CD8-positive, alpha-beta T cell (primary cell): ENCODE measurements at regions of chr5 and their contacts with region 1.

Region 1: DNA sequence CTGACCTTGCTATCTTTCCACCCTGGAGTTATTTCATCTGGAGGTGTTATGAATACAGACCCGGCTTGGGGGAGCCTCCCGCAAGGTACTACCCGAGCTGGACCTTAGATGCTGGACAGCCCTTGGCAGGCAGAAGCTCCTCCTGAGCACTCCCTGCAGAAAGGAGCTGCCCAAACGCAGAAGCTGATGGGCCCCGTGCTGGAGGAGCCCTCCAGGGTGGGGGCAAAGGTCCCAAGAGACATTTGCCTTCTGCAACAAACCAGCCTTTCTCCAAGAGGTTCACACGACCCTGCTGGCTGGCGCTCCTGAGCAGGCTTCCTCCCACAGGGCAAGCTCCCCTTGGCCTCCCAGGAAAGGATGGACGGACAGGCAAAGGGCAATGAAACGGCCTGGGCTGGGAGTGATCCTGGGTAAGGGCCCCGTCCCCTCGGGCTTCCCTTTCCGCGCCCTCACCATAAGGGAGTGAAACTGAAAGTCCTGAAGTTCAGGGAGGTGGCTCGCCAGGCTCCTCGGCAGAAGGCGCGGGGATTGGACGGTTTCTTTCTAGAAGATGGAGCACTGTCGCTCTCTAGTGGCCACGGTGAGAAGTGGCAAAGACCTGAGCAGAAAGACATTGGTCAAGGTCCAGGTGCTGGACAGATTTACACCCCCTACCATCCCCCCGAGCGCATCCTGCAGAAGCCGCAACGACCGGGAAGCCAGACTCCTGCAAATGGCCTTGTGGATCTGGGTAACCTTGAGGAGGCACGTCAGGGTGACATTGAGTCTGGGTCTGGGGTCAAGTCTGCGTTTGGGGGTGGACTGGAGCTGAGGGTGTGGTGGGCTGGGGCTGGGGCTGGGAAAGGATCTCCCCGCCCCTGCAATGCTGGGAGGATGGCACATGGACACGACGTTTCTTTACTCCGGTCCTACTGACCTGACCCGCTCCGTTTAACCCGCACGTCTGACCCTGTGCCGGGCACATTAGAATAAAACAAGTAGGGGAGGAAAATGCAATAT is 56.4 kb downstream of the NEURL1B start:
- DNase-seq: peak; percentile 67 to 92 (median 84)
- ATAC-seq: peak; percentile 98
- H3K4me3 ChIP-seq: peak overlapping the region; percentile 64 to 90
- H3K4me3 Mint-ChIP-seq: peak overlapping the region; percentile 93
- H3K27ac ChIP-seq: peak overlapping the region; percentile 43 to 81
- H3K27ac Mint-ChIP-seq: peak overlapping the region; percentile 92
- H3K4me1 ChIP-seq: peaks cover 10% of the 10 kb centered on the region
- H3K4me1 Mint-ChIP-seq: peaks cover 22% of the 10 kb centered on the region
- H3K27me3 ChIP-seq: peaks cover 0 to 3% of the 10 kb centered on the region in 2 experiments
- H3K27me3 Mint-ChIP-seq: peaks cover 16% of the 10 kb centered on the region
- CTCF ChIP-seq: peak; percentile 81

Region 2: GRCh38 chr5:171207256-171207847 is 1490.1 kb before region 1 on chr5:
- CTCF ChIA-PET with region 1: no interaction called
- POLR2A ChIA-PET with region 1: no interaction called
- intact Hi-C with region 1: loop called in 1 of 2 experiments (anchors 5 kb)
- DNase-seq: peak in 5 of 9 experiments; percentile 1 to 59 (median 17)
- ATAC-seq: no peak
- H3K4me3 ChIP-seq: no peak overlapping the region
- H3K4me3 Mint-ChIP-seq: no peak overlapping the region
- H3K27ac ChIP-seq: no peak overlapping the region
- H3K27ac Mint-ChIP-seq: no peak overlapping the region
- H3K4me1 ChIP-seq: no peaks in the 10 kb centered on the region
- H3K4me1 Mint-ChIP-seq: no peaks in the 10 kb centered on the region
- H3K27me3 ChIP-seq: no peaks in the 10 kb centered on the region
- H3K27me3 Mint-ChIP-seq: peaks cover 9% of the 10 kb centered on the region
- CTCF ChIP-seq: peak; percentile 33

Region 3: GRCh38 chr5:172283020-172283861 is 414.2 kb before region 1 on chr5 and contains the start of gene UBTD2:
- CTCF ChIA-PET with region 1: no interaction called
- POLR2A ChIA-PET with region 1: no interaction called
- intact Hi-C with region 1: loop called in 1 of 2 experiments (anchors 10 kb)
- DNase-seq: peak; percentile 44 to 85 (median 70)
- ATAC-seq: peak; percentile 76
- H3K4me3 ChIP-seq: peak within 1 kb of the TSS; percentile 76 to 78
- H3K4me3 Mint-ChIP-seq: peak within 1 kb of the TSS; percentile 88
- H3K27ac ChIP-seq: no peak within 1 kb of the TSS
- H3K27ac Mint-ChIP-seq: peak within 1 kb of the TSS; percentile 77
- H3K4me1 ChIP-seq: peaks cover 18% of the 10 kb centered on the region
- H3K4me1 Mint-ChIP-seq: peaks cover 26% of the 10 kb centered on the region
- H3K27me3 ChIP-seq: no peaks in the 10 kb centered on the region
- H3K27me3 Mint-ChIP-seq: no peaks in the 10 kb centered on the region
- CTCF ChIP-seq: peak; percentile 61
- total RNA-seq, gene UBTD2: 0.78 to 0.79 TPM

Region 4: DNA sequence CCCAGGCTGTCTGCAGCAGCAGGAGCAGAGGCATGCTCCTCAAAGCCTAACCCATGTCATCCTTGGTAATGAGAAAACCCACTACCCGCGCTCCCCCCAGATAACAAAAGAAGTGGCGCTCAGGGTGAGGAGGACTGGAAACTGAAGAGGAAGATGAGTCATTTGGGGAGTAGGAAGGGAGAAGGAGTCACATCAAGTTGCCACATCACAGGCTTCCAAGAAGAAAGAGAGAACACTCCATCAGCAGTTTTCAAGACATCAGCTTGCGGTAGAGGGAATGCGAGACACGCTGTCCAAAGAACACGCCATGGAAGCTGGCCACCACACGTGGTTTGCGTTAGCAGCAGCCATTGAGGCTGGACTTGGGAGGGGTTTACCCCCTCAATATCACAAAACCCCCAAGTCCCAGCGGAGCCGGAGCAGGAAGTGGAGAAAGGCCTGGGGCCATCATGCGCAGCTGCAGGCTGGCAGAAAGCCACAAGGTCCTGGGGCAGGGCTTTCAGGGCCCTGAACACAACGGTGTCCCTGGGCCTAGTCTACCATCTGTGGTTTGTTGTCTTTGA is 284.6 kb before region 1 on chr5:
- CTCF ChIA-PET with region 1: no interaction called
- POLR2A ChIA-PET with region 1: no interaction called
- intact Hi-C with region 1: no loop called
- DNase-seq: peak in 1 of 9 experiments; percentile 25
- ATAC-seq: no peak
- H3K4me3 ChIP-seq: no peak overlapping the region
- H3K4me3 Mint-ChIP-seq: no peak overlapping the region
- H3K27ac ChIP-seq: no peak overlapping the region
- H3K27ac Mint-ChIP-seq: no peak overlapping the region
- H3K4me1 ChIP-seq: no peaks in the 10 kb centered on the region
- H3K4me1 Mint-ChIP-seq: no peaks in the 10 kb centered on the region
- H3K27me3 ChIP-seq: no peaks in the 10 kb centered on the region
- H3K27me3 Mint-ChIP-seq: peaks cover 2% of the 10 kb centered on the region
- CTCF ChIP-seq: no peak

Region 5: GRCh38 chr5:172479044-172479783 is 218.2 kb before region 1 on chr5:
- CTCF ChIA-PET with region 1: interaction called, 58 read pairs
- POLR2A ChIA-PET with region 1: no interaction called
- intact Hi-C with region 1: loop called in 1 of 2 experiments (anchors 1 kb)
- DNase-seq: peak; percentile 18 to 79 (median 53)
- ATAC-seq: peak; percentile 87
- H3K4me3 ChIP-seq: no peak overlapping the region
- H3K4me3 Mint-ChIP-seq: no peak overlapping the region
- H3K27ac ChIP-seq: no peak overlapping the region
- H3K27ac Mint-ChIP-seq: no peak overlapping the region
- H3K4me1 ChIP-seq: no peaks in the 10 kb centered on the region
- H3K4me1 Mint-ChIP-seq: no peaks in the 10 kb centered on the region
- H3K27me3 ChIP-seq: no peaks in the 10 kb centered on the region
- H3K27me3 Mint-ChIP-seq: peaks cover 10% of the 10 kb centered on the region
- CTCF ChIP-seq: peak; percentile 47

Region 6: DNA sequence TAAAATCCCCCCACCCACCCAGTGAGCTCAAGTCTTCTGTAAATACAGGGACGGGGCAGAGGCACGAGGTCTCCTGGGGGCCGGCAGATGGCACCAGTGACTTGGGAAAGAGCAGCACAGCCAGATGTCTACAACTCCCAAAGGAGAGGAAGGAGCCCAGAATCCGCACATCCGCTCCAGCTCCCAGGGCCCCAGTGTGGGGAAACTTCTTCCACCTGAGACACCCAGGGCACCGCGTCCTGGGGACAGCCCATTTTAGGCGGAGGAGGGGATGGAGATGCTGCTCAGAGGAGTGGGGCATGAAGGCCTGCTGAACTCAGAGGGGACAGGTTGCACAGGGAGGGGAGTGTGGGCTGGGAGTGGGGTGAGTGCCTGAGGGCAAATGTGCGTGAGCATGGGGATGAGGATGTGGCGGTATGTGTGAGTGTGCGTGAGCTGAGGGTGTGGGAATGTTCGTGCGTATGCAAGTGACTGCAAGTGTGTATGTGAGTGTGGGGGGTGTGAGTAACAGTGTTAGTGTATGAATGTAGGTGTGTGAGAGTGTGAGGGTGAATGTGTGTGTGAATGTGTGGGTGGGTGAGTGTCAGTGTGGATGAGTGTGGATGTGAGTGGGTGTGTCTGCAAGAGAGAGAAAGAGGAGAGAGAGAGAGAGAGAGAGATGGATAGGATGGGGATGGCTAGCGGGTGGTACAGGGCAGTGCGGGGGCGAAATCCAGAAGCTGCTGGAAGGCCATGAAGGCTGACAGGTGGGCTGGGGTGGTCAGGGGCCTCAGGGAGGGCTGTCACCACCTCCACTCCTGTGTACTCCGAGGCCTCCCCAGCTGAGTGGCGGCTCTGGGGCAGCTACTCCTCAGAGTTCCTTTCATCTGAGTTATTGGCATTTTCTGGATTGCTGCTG is 10.1 kb after region 1 on chr5:
- CTCF ChIA-PET with region 1: interaction called, 22 read pairs
- POLR2A ChIA-PET with region 1: no interaction called
- intact Hi-C with region 1: no loop called
- DNase-seq: peak in 1 of 9 experiments; percentile 31
- ATAC-seq: no peak
- H3K4me3 ChIP-seq: no peak overlapping the region
- H3K4me3 Mint-ChIP-seq: no peak overlapping the region
- H3K27ac ChIP-seq: no peak overlapping the region
- H3K27ac Mint-ChIP-seq: no peak overlapping the region
- H3K4me1 ChIP-seq: no peaks in the 10 kb centered on the region
- H3K4me1 Mint-ChIP-seq: peaks cover 2% of the 10 kb centered on the region
- H3K27me3 ChIP-seq: peaks cover 0 to 3% of the 10 kb centered on the region in 2 experiments
- H3K27me3 Mint-ChIP-seq: peaks cover 47% of the 10 kb centered on the region
- CTCF ChIP-seq: no peak

Region 7: GRCh38 chr5:172724242-172725183 is 27.1 kb after region 1 on chr5:
- CTCF ChIA-PET with region 1: no interaction called
- POLR2A ChIA-PET with region 1: no interaction called
- intact Hi-C with region 1: no loop called
- DNase-seq: no peak
- ATAC-seq: no peak
- H3K4me3 ChIP-seq: no peak overlapping the region
- H3K4me3 Mint-ChIP-seq: no peak overlapping the region
- H3K27ac ChIP-seq: no peak overlapping the region
- H3K27ac Mint-ChIP-seq: no peak overlapping the region
- H3K4me1 ChIP-seq: peaks cover 5% of the 10 kb centered on the region
- H3K4me1 Mint-ChIP-seq: peaks cover 16% of the 10 kb centered on the region
- H3K27me3 ChIP-seq: no peaks in the 10 kb centered on the region
- H3K27me3 Mint-ChIP-seq: no peaks in the 10 kb centered on the region
- CTCF ChIP-seq: no peak